Activated CD8-positive, alpha-beta T cell treated with anti-CD3 and anti-CD28 coated beads for 36 hours (primary cell): ENCODE measurements at regions of chr1 and their contacts with region 1.

Region 1: GRCh38 chr1:32716312-32717148 is 14.0 kb upstream of the SYNC start:
- DNase-seq: peak; percentile 84
- ATAC-seq: peak; percentile 88
- H3K4me3 Mint-ChIP-seq: no peak overlapping the region
- H3K27ac Mint-ChIP-seq: no peak overlapping the region
- H3K4me1 Mint-ChIP-seq: peaks cover 4% of the 10 kb centered on the region
- H3K27me3 Mint-ChIP-seq: peaks cover 4% of the 10 kb centered on the region
- CTCF ChIP-seq: no peak

Region 2: GRCh38 chr1:32521165-32521564 is 195.4 kb before region 1 on chr1:
- CTCF ChIA-PET with region 1: interaction called, 19 read pairs
- POLR2A ChIA-PET with region 1: no interaction called
- intact Hi-C with region 1: no loop called
- DNase-seq: no peak
- ATAC-seq: no peak
- H3K4me3 Mint-ChIP-seq: peak overlapping the region; percentile 67
- H3K27ac Mint-ChIP-seq: no peak overlapping the region
- H3K4me1 Mint-ChIP-seq: peaks cover 2% of the 10 kb centered on the region
- H3K27me3 Mint-ChIP-seq: peaks cover 5% of the 10 kb centered on the region
- CTCF ChIP-seq: no peak

Region 3: GRCh38 chr1:32572738-32573137 is 143.8 kb before region 1 on chr1:
- CTCF ChIA-PET with region 1: no interaction called
- POLR2A ChIA-PET with region 1: no interaction called
- intact Hi-C with region 1: no loop called
- DNase-seq: no peak
- ATAC-seq: no peak
- H3K4me3 Mint-ChIP-seq: no peak overlapping the region
- H3K27ac Mint-ChIP-seq: no peak overlapping the region
- H3K4me1 Mint-ChIP-seq: no peaks in the 10 kb centered on the region
- H3K27me3 Mint-ChIP-seq: peaks cover 5% of the 10 kb centered on the region
- CTCF ChIP-seq: no peak

Region 4: GRCh38 chr1:32702599-32703478 is 13.7 kb before region 1 on chr1 and contains the start of gene SYNC:
- CTCF ChIA-PET with region 1: interaction called, 13 read pairs
- POLR2A ChIA-PET with region 1: interaction called, 4 read pairs
- intact Hi-C with region 1: no loop called
- DNase-seq: peak; percentile 33
- ATAC-seq: peak; percentile 68
- H3K4me3 Mint-ChIP-seq: peak within 1 kb of the TSS; percentile 1
- H3K27ac Mint-ChIP-seq: no peak within 1 kb of the TSS
- H3K4me1 Mint-ChIP-seq: peaks cover 5% of the 10 kb centered on the region
- H3K27me3 Mint-ChIP-seq: peaks cover 30% of the 10 kb centered on the region
- CTCF ChIP-seq: no peak
- total RNA-seq, gene SYNC: not detected

Region 5: DNA sequence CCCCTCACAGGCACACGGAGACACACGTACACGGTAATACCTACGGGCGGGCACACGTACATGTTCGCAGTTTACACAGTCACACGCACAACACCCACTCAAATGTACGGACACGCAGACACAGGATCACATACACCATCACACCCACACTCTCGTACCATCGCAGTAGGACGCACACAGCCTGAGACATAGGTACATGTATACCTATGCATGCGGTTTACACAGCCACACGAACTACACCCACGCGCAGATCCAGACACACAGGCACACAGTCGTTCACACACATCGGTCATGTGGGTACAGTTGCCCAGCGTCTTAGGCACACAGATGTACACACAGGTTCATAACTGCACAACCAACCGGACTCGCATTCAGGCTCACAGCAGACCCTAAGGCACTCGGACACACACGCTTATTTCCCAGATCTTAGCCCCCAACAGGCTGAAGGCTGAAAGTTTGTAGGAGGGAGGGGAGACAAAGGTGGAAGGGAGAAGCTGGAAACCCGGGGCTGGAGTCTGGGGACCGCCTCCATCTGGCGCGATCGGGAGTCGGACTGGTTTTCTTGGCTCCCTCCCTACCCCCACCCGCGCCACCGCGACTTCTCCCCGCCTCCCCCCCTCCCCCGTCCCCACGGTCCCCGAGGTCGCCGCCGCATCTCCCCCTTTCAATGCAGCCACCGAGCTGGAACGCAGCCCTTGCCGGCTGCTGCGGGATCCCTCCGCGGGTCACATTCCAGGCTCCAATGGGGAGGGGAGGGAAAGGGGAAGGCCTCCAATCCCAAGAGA is 38.0 kb after region 1 on chr1:
- CTCF ChIA-PET with region 1: interaction called, 17 read pairs
- POLR2A ChIA-PET with region 1: no interaction called
- intact Hi-C with region 1: loop called (anchors 5 kb)
- DNase-seq: peak; percentile 84
- ATAC-seq: peak; percentile 75
- H3K4me3 Mint-ChIP-seq: peak overlapping the region; percentile 39
- H3K27ac Mint-ChIP-seq: no peak overlapping the region
- H3K4me1 Mint-ChIP-seq: peaks cover 16% of the 10 kb centered on the region
- H3K27me3 Mint-ChIP-seq: peaks cover 4% of the 10 kb centered on the region
- CTCF ChIP-seq: no peak

Region 6: GRCh38 chr1:32782086-32782485 is 65.6 kb after region 1 on chr1:
- CTCF ChIA-PET with region 1: interaction called, 197 read pairs
- POLR2A ChIA-PET with region 1: interaction called, 3 read pairs
- intact Hi-C with region 1: no loop called
- DNase-seq: no peak
- ATAC-seq: no peak
- H3K4me3 Mint-ChIP-seq: no peak overlapping the region
- H3K27ac Mint-ChIP-seq: peak overlapping the region; percentile 12
- H3K4me1 Mint-ChIP-seq: no peaks in the 10 kb centered on the region
- H3K27me3 Mint-ChIP-seq: no peaks in the 10 kb centered on the region
- CTCF ChIP-seq: no peak

Region 7: DNA sequence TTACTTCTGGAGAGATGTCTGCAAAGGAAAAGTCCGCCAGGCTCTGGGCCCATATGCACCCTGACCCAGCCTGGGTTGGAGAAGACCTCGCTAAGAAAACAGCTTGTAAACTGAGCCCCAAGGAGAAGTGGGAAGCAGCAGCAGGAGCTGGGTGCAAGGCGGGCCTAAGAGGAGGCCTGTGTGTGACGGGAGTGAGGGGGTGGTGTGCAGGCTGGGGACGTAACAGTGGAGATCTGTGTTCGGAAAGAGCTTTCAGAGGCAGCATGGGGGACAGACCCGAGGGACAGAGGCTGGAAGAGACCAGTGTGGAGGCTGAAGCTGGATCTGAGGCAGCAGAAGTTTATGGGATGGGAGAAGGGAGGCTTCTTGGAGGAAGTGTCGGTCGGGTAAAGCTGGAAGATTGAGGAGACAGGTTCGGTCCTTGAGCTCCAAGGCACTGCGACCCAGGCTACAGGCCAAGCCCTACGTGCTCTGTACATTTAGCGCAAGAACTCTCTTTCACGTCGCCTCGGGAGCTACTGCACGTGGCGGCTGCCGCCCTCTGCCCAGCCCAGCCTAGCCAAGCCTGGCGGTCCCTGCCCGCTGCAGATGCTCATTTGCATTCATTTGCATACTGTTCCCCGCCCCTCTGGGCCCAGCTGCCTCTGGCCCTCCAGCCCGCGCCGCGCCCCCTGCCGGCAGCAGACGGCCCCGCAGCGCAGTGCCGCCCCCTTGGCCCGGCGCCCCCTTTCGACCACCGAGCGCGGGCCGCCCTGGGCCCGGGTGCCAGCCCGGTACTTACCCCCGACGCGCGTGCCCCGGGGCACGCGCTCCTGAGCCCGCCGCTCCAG is 176.1 kb after region 1 on chr1:
- CTCF ChIA-PET with region 1: interaction called, 13 read pairs
- POLR2A ChIA-PET with region 1: no interaction called
- intact Hi-C with region 1: no loop called
- DNase-seq: peak; percentile 75
- ATAC-seq: peak; percentile 93
- H3K4me3 Mint-ChIP-seq: peak overlapping the region; percentile 51
- H3K27ac Mint-ChIP-seq: no peak overlapping the region
- H3K4me1 Mint-ChIP-seq: peaks cover 5% of the 10 kb centered on the region
- H3K27me3 Mint-ChIP-seq: peaks cover 51% of the 10 kb centered on the region
- CTCF ChIP-seq: peak; percentile 86

Region 8: GRCh38 chr1:33286451-33287185 is 570.1 kb after region 1 on chr1:
- CTCF ChIA-PET with region 1: no interaction called
- POLR2A ChIA-PET with region 1: no interaction called
- intact Hi-C with region 1: no loop called
- DNase-seq: no peak
- ATAC-seq: no peak
- H3K4me3 Mint-ChIP-seq: no peak overlapping the region
- H3K27ac Mint-ChIP-seq: no peak overlapping the region
- H3K4me1 Mint-ChIP-seq: no peaks in the 10 kb centered on the region
- H3K27me3 Mint-ChIP-seq: no peaks in the 10 kb centered on the region
- CTCF ChIP-seq: no peak